Head of caudate nucleus (tissue), 42 donors: ENCODE measurements at regions of chr16 and their contacts with region 1.

Region 1: DNA sequence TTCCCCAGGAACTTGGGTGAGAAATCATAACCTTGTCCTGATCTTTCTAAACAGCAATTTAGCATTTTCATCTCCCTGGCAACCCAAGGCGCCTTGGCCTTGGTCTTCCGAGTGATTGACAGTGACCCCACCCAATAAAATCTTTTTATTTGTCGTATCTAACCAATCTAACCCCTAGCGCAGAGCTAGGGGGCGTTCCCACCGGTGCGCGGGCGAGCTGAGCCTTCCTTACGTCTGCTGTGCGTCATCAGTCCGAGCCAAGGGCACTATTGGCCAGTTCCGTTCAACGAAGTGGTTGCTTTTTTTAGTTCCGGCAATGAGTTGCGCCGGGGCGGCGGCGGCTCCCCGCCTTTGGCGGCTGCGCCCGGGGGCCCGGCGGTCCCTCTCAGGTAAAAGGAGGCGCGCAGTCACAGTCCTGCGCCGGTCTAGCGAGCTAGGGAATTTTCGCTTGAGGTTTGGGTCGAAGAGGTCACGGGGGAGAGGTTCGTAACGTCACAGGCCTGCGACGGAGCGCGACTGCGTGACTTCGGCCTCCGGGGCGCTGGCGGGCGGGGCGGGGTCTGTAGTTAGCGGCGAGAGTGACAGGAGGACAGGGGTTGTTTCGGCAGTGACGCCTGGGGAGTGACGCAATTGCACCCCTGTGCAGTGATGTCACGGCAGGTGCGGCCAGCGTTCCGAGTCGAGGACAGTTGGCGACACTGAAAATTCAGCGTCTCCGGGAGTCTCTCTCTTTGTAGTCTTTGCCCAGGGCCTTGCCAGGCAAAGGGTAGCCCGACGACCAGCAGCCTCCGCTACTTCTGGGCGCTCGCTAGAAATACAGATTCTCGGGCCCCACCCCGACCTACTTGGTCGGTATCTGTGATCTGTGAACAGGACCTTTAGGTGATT is at the start of gene COQ7:
- DNase-seq: peak; percentile 95 to 99 (median 98)

Region 2: DNA sequence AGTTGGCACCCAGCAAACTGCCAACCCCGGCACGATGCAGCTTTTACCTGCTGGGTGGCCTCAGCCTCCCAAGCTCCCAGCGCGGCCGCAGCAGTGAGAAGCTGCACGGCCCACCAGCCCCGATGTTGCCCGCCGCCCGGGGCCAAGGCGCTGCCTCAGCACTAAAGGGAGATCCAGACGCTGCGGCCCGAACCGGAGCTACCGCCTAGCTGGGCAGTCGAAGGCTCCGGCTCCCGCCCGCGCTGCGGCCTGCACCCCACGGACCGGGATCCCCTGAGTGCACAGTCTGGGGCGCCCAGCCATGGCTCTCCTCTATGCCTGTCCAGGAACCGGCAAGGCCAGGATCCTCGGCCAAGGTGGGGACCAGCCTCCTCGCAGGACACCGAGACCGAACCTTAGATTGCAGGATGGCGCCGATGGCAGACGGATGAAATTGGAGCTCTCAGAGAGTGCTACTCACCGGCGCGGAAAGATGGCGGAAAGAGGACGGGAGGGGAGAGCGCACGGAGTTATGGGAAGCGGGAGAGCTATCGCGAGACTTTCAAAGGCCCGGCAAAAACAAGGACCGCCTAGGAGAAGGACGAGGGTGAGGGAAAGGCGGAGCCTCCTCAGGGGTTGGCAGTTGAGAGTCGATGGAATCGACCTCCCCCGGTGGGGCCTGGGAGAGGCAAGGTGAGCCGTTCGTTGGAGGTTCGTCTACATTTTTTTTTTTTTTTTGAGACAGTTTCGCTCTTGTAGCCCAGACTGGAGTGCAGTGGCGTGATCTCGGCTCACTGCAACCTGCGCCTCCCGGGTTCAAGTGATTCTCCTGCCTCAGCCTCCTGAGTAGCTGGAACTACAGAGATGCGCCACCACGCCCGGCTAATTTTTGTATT is 277.5 kb before region 1 on chr16 and contains the start of gene RPS15A:
- intact Hi-C with region 1: loop called (anchors 10 kb)
- DNase-seq: peak; percentile 88 to 98 (median 94)

Region 3: GRCh38 chr16:18932243-18932981 is 135.2 kb before region 1 on chr16:
- intact Hi-C with region 1: loop called (anchors 10 kb)
- DNase-seq: peak in 2 of 42 donors; percentile 11 to 50

Region 4: GRCh38 chr16:18983565-18984424 is 83.8 kb before region 1 on chr16 and contains the start of gene TMC7:
- intact Hi-C with region 1: loop called (anchors 5 kb)
- DNase-seq: peak; percentile 83 to 98 (median 94)